Esophagus muscularis mucosa (tissue), 4 donors: ENCODE measurements at regions of chr1 and their contacts with region 1.

Region 1: GRCh38 chr1:23098463-23099170 is 70.0 kb downstream of the LUZP1 start:
- DNase-seq: no peak
- H3K4me3 ChIP-seq: peak overlapping the region in 1 of 4 donors; percentile 8
- H3K27ac ChIP-seq: peak overlapping the region in 2 of 4 donors; percentile 14 to 29
- H3K4me1 ChIP-seq: peaks cover 49 to 63% (median 56%) of the 10 kb centered on the region in 4 donors
- H3K27me3 ChIP-seq: no peaks in the 10 kb centered on the region
- CTCF ChIP-seq: peak; percentile 96 to 98 (median 96)
- EP300 ChIP-seq: no peak
- POLR2A ChIP-seq: peak; percentile 14

Region 2: DNA sequence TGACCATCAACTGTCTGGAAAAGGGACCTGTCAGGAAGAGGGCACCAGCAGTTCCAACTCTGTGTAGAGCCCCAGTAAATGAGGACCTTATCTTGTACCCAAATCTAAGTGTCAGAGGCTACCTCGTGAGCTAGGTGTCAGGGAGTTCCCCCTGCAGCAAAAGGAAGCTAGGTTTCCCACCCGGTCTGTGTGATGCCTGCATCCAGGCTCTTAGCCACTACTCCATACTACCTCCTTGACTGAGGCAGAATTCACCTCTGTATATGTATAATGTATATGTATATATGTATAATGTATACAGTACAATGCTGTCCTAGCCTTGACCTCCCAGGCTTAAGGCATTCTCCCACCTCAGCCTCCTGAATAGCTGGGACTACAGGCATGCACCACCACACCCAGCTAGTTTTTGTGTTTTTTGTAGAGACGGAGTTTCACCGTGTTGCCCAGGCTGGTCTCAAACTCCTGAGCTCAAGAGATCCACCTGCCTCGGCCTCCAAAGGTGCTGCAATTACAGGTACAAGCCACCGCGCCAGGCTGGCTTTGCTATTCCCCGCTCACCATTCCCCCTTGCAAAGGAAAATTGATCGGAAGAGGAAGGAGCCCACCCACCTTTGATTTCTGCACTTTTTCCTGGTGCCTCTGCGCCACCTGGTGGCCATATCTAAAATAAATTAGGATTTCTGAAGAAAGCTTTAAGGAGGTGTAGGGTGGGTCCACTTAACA is 85.8 kb after region 1 on chr1:
- intact Hi-C with region 1: loop called (anchors 1 kb)
- DNase-seq: no peak
- H3K4me3 ChIP-seq: peak overlapping the region; percentile 39 to 56 (median 44)
- H3K27ac ChIP-seq: no peak overlapping the region
- H3K4me1 ChIP-seq: peaks cover 6 to 7% (median 7%) of the 10 kb centered on the region in 4 donors
- H3K27me3 ChIP-seq: no peaks in the 10 kb centered on the region
- CTCF ChIP-seq: peak; percentile 70 to 87 (median 83)
- EP300 ChIP-seq: no peak
- POLR2A ChIP-seq: no peak